Activated T-helper 1 cell treated with anti-CD3 and anti-CD28 coated beads, Interleukin-12 subunit alpha, Interleukin-12 subunit beta, Interleukin-2, Interleukin-4 antibody, amounts not matched to agents 30 ng/mL and 10 ng/mL and 1 ng/mL, durations not matched to agents 14 hours and 24 hours and 36 hours (primary cell): ENCODE measurements at regions of chr11 and their contacts with region 1.

Region 1: DNA sequence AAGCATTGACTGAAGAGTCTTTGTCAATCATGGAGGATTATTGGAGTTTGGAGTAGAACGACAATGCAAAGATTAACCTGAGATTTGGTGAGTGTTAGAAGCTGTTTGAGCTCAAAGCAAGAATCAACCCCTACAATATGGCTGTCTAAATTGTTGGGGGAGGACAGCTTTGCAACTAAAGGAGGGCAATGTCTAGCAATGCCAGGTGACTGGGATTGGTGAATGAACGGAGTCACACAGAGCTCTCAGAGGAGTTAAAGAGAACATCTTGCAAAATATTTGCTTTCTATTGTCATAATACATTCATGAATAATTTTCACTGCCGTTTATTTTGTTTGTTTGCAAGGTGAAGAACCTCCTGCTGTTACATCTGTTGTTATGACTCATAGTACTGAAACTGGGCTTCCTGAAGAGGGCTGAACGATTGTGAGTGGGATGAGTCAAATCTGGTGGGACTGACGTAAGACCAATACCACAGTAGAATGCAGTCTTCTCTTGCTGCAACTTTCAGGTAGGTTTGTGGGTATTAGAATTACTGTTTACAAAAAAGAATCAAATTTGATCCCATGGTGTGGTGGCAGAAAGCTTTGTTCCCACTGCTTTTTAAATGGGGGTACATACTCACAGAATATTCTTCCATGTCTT is 281.9 kb downstream of the CADM1 start:
- DNase-seq: peak; percentile 49
- H3K4me3 Mint-ChIP-seq: peak overlapping the region; percentile 27
- H3K27ac Mint-ChIP-seq: peak overlapping the region; percentile 85
- H3K4me1 Mint-ChIP-seq: peaks cover 60% of the 10 kb centered on the region
- H3K27me3 Mint-ChIP-seq: peaks cover 19% of the 10 kb centered on the region

Region 2: GRCh38 chr11:113314389-113315301 is 1907.7 kb before region 1 on chr11 and contains the start of gene TTC12:
- intact Hi-C with region 1: loop called (anchors 10 kb)
- DNase-seq: peak; percentile 89
- H3K4me3 Mint-ChIP-seq: peak within 1 kb of the TSS; percentile 81
- H3K27ac Mint-ChIP-seq: peak within 1 kb of the TSS; percentile 70
- H3K4me1 Mint-ChIP-seq: peaks cover 20% of the 10 kb centered on the region
- H3K27me3 Mint-ChIP-seq: no peaks in the 10 kb centered on the region
- total RNA-seq, gene TTC12: 7.4 and 8.5 TPM in 2 replicates

Region 3: GRCh38 chr11:114400217-114400914 is 822.0 kb before region 1 on chr11 and contains the starts of genes C11orf71 and RBM7:
- intact Hi-C with region 1: loop called (anchors 1 kb)
- DNase-seq: peak; percentile 97
- H3K4me3 Mint-ChIP-seq: peak within 1 kb of the TSS; percentile 92
- H3K27ac Mint-ChIP-seq: peak within 1 kb of the TSS; percentile 98
- H3K4me1 Mint-ChIP-seq: peaks cover 51% of the 10 kb centered on the region
- H3K27me3 Mint-ChIP-seq: no peaks in the 10 kb centered on the region
- total RNA-seq, gene C11orf71: 7.7 and 9.3 TPM in 2 replicates
- total RNA-seq, gene RBM7: 34.4 and 38.8 TPM in 2 replicates

Region 4: GRCh38 chr11:115193914-115194801 is 28.2 kb before region 1 on chr11:
- intact Hi-C with region 1: loop called (anchors 1 kb)
- DNase-seq: no peak
- H3K4me3 Mint-ChIP-seq: no peak overlapping the region
- H3K27ac Mint-ChIP-seq: peak overlapping the region; percentile 40
- H3K4me1 Mint-ChIP-seq: peaks cover 12% of the 10 kb centered on the region
- H3K27me3 Mint-ChIP-seq: peaks cover 7% of the 10 kb centered on the region

Region 5: GRCh38 chr11:115256397-115257197 is 34.3 kb after region 1 on chr11:
- intact Hi-C with region 1: no loop called
- DNase-seq: no peak
- H3K4me3 Mint-ChIP-seq: no peak overlapping the region
- H3K27ac Mint-ChIP-seq: no peak overlapping the region
- H3K4me1 Mint-ChIP-seq: peaks cover 11% of the 10 kb centered on the region
- H3K27me3 Mint-ChIP-seq: peaks cover 5% of the 10 kb centered on the region

Region 6: GRCh38 chr11:115379528-115379927 is 157.2 kb after region 1 on chr11:
- intact Hi-C with region 1: loop called (anchors 1 kb)
- DNase-seq: no peak
- H3K4me3 Mint-ChIP-seq: no peak overlapping the region
- H3K27ac Mint-ChIP-seq: no peak overlapping the region
- H3K4me1 Mint-ChIP-seq: no peaks in the 10 kb centered on the region
- H3K27me3 Mint-ChIP-seq: peaks cover 4% of the 10 kb centered on the region

Region 7: DNA sequence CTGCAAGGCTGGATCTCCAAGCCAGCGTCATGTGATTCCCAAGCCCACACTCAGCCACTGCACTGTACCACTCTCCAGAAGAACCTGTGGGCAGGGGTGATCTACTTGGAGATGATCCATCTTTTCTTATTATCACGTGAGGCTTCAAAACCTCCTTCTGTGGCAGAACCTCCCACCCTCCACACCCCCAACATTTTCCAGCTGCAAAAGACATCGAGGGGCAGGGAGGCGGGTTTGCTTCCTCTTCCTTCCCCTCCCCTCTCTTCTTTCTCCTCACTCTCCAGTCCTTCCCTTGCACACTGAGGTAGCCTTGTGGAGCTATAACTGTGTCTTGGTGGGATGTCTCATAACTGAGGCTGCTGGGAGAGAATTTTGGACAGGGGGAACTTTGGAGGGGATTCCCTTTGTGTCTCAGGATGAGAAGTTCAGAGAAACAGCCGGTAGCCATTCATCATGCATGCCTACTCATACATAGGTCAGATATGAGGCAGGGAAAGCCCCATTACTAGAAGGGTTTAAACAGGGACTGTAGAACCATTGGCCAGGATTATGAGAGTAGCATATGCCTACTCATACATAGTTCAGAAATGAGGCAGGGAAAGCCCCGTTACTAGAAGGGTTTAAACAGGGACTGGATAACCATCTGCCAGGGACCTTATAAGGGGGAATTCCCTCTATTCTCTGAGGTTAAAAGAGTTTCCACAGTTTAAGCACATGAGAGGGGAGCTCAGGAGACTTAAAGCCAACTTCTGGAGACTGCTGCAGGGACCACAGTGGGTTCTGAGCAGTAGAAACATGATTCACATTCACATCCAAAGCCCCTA is 702.6 kb after region 1 on chr11:
- intact Hi-C with region 1: loop called (anchors 2 kb)
- DNase-seq: peak; percentile 1
- H3K4me3 Mint-ChIP-seq: no peak overlapping the region
- H3K27ac Mint-ChIP-seq: peak overlapping the region; percentile 70
- H3K4me1 Mint-ChIP-seq: peaks cover 12% of the 10 kb centered on the region
- H3K27me3 Mint-ChIP-seq: peaks cover 3% of the 10 kb centered on the region